AG04449 (cell line): ENCODE measurements at regions of chr15 and their contacts with region 1.

Region 1: DNA sequence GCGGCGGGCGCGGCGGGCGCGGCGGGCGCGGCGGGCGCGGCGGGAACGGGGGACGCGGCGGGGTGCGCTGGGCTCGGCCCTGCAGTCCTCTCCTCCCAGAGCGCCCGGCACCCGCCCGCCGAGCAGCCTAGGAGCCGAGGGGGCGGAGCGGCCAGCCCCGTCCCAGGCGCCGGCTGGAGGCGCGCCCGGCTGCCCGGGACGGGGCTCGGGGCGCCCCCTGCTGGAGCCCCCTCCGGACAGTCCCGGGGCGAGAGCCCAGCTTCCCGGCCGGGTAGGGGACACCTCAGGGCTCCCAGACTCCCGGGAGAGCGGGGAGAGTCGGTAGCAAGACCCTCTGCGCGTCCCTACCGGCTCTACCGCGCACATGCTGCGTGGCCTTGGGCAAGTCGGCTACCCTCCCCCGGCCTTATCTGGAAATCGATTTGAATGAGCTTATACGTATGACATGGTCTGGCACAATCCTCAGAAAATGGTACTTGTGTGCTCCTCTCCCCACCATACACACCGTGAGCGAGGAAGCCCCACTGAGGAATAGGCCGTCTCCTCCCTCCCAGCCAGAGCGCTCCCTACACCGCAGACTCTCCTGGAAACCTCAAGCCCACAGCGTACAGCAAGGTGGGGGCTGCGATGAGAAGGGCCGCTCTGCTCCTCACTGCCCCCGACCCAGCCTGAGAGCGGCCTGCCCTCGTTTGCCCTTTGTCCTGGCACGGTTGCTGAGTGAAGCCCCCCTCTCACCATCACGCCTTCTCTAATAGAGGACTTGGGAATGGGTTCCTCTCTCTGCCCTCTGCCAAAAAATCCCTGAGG is at the start of gene DAPK2:
- DNase-seq: no peak
- H3K4me3 ChIP-seq: peak within 1 kb of the TSS; percentile 60
- CTCF ChIP-seq: peak; percentile 71

Region 2: DNA sequence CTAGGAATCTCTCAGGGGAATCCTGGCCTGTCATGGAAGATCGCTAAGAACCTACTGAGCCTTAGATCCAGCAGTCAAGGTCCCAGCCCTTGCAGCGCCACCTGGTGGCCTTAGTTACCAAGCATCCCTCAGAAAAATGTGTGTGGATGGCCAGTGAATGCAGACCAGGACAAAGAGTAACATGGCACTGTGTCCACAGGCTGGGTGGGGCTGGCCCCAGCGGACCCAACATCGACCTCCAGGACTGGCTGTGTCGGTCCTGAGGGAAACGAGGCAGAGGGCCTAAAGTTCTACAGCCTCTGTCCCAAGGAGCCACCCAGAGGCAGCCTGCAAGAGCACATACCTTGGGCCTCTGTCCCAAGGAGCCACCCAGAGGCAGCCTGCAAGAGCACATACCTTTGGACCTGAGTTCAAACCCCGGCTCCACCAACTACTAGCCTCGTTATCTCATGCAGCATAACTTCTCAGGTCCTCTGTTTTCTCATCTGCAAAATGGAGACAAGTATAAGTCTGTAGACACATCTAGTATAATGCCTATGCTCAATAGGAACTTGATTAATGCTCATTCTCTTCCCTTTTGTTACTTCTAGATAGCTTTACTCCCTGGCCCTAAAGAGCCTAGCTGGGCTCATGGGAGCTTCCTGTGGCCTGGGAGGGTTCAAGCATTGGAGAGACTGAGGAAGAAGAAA is 155.3 kb before region 1 on chr15:
- CTCF ChIA-PET with region 1: interaction called, 10 read pairs
- POLR2A ChIA-PET with region 1: no interaction called
- DNase-seq: no peak
- H3K4me3 ChIP-seq: no peak overlapping the region
- CTCF ChIP-seq: peak; percentile 91

Region 3: GRCh38 chr15:63978511-63979261 is 67.9 kb before region 1 on chr15:
- CTCF ChIA-PET with region 1: interaction called, 11 read pairs
- POLR2A ChIA-PET with region 1: no interaction called
- DNase-seq: no peak
- H3K4me3 ChIP-seq: no peak overlapping the region
- CTCF ChIP-seq: no peak

Region 4: GRCh38 chr15:64023215-64023614 is 23.3 kb before region 1 on chr15:
- CTCF ChIA-PET with region 1: interaction called, 12 read pairs
- POLR2A ChIA-PET with region 1: no interaction called
- DNase-seq: no peak
- H3K4me3 ChIP-seq: no peak overlapping the region
- CTCF ChIP-seq: no peak

Region 5: GRCh38 chr15:64058279-64058678 is 11.7 kb after region 1 on chr15:
- CTCF ChIA-PET with region 1: interaction called, 129 read pairs
- POLR2A ChIA-PET with region 1: no interaction called
- DNase-seq: no peak
- H3K4me3 ChIP-seq: no peak overlapping the region
- CTCF ChIP-seq: no peak